ENCODE measurements at regions of chr5 and their contacts with region 1.

Region 1: GRCh38 chr5:96177303-96177869 is 215.7 kb upstream of the ELL2 start:
- DNase-seq: peak; percentile 55
- H3K4me3 Mint-ChIP-seq: peak overlapping the region; percentile 48
- H3K27ac Mint-ChIP-seq: peak overlapping the region; percentile 68
- H3K4me1 Mint-ChIP-seq: peaks cover 51% of the 10 kb centered on the region
- H3K27me3 Mint-ChIP-seq: no peaks in the 10 kb centered on the region
- CTCF ChIP-seq: no peak

Region 2: GRCh38 chr5:95760273-95761191 is 416.9 kb before region 1 on chr5:
- CTCF ChIA-PET with region 1: no interaction called
- intact Hi-C with region 1: no loop called
- DNase-seq: no peak
- H3K4me3 Mint-ChIP-seq: peak overlapping the region; percentile 22
- H3K27ac Mint-ChIP-seq: no peak overlapping the region
- H3K4me1 Mint-ChIP-seq: peaks cover 37% of the 10 kb centered on the region
- H3K27me3 Mint-ChIP-seq: no peaks in the 10 kb centered on the region
- CTCF ChIP-seq: no peak

Region 3: DNA sequence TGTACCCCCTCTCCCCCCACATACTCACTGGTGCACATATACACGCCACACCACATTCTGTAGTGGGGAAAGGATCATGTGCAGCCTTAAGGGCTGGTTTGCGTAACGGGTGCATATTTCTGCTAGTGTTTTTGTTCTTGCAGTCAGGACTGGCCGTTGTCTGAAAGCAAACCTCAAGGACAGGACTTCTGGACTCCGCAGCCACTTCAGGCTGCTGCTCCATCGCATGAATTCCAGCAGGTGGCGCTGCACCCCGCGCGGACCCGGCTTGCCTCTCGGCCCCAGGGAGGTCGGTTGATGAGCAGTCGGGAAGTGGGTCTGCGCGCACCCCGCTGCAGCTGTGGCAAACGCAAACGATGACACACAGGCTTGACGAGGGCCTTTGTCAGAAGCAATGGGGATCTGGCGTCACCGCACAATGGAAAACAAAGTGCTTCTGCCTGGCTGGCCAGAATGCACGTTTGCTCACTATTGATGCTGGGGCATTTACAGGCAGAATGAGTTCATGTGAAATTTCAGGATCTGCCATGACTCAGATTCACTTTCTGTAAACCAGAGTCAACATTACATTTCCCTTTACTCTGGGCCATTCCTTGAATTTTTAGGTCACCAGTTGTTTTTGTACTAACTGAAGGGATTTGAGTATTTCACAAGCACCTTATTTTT is 318.6 kb before region 1 on chr5:
- CTCF ChIA-PET with region 1: no interaction called
- intact Hi-C with region 1: loop called (anchors 5 kb)
- DNase-seq: peak; percentile 95
- H3K4me3 Mint-ChIP-seq: peak overlapping the region; percentile 63
- H3K27ac Mint-ChIP-seq: peak overlapping the region; percentile 80
- H3K4me1 Mint-ChIP-seq: peaks cover 48% of the 10 kb centered on the region
- H3K27me3 Mint-ChIP-seq: no peaks in the 10 kb centered on the region
- CTCF ChIP-seq: peak; percentile 98

Region 4: GRCh38 chr5:95870105-95870672 is 307.2 kb before region 1 on chr5:
- CTCF ChIA-PET with region 1: no interaction called
- intact Hi-C with region 1: loop called (anchors 5 kb)
- DNase-seq: no peak
- H3K4me3 Mint-ChIP-seq: no peak overlapping the region
- H3K27ac Mint-ChIP-seq: no peak overlapping the region
- H3K4me1 Mint-ChIP-seq: peaks cover 25% of the 10 kb centered on the region
- H3K27me3 Mint-ChIP-seq: no peaks in the 10 kb centered on the region
- CTCF ChIP-seq: no peak

Region 5: DNA sequence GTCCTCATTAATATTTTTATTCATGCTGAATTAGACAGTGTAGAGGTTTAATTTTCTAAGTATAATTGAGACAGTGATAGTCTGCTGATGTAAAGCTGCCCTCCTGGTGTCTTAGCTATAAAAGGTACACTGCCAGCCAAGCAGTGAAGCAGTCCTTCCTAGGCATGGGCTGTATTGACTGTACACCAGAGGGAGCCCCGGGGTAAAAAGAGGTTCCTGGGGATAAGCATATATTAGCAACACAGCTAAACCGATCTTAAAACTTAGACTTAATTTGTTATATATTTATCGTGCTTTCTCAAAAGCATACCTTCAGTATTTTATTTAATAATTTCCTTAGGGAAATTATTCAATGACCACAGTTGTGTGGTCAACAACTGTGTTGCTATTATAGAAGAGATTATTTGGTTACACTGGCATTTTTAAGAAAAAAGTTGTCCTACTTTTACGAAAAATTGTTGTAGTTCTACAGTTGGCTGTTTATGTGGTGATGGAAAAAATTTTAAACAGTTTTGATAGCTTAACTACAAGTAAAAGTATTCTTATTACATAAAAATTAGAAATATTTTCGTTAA is 284.5 kb before region 1 on chr5:
- CTCF ChIA-PET with region 1: interaction called, 4 read pairs
- intact Hi-C with region 1: loop called (anchors 10 kb)
- DNase-seq: peak; percentile 74
- H3K4me3 Mint-ChIP-seq: no peak overlapping the region
- H3K27ac Mint-ChIP-seq: no peak overlapping the region
- H3K4me1 Mint-ChIP-seq: peaks cover 6% of the 10 kb centered on the region
- H3K27me3 Mint-ChIP-seq: no peaks in the 10 kb centered on the region
- CTCF ChIP-seq: peak; percentile 51

Region 6: GRCh38 chr5:96093890-96094381 is 83.5 kb before region 1 on chr5:
- CTCF ChIA-PET with region 1: no interaction called
- intact Hi-C with region 1: loop called (anchors 2 kb)
- DNase-seq: peak; percentile 41
- H3K4me3 Mint-ChIP-seq: peak overlapping the region; percentile 0
- H3K27ac Mint-ChIP-seq: peak overlapping the region; percentile 68
- H3K4me1 Mint-ChIP-seq: peaks cover 46% of the 10 kb centered on the region
- H3K27me3 Mint-ChIP-seq: no peaks in the 10 kb centered on the region
- CTCF ChIP-seq: no peak